Esophagus muscularis mucosa (tissue), 4 donors: ENCODE measurements at regions of chr18 and their contacts with region 1.

Region 1: GRCh38 chr18:9516437-9517064 is 41.2 kb downstream of the RALBP1 start:
- DNase-seq: no peak
- H3K4me3 ChIP-seq: no peak overlapping the region
- H3K27ac ChIP-seq: peak overlapping the region in 3 of 4 donors; percentile 12 to 37 (median 28)
- H3K4me1 ChIP-seq: peaks cover 0 to 50% (median 32%) of the 10 kb centered on the region in 4 donors
- H3K27me3 ChIP-seq: no peaks in the 10 kb centered on the region
- CTCF ChIP-seq: peak; percentile 73 to 87 (median 78)
- EP300 ChIP-seq: no peak
- POLR2A ChIP-seq: no peak

Region 2: DNA sequence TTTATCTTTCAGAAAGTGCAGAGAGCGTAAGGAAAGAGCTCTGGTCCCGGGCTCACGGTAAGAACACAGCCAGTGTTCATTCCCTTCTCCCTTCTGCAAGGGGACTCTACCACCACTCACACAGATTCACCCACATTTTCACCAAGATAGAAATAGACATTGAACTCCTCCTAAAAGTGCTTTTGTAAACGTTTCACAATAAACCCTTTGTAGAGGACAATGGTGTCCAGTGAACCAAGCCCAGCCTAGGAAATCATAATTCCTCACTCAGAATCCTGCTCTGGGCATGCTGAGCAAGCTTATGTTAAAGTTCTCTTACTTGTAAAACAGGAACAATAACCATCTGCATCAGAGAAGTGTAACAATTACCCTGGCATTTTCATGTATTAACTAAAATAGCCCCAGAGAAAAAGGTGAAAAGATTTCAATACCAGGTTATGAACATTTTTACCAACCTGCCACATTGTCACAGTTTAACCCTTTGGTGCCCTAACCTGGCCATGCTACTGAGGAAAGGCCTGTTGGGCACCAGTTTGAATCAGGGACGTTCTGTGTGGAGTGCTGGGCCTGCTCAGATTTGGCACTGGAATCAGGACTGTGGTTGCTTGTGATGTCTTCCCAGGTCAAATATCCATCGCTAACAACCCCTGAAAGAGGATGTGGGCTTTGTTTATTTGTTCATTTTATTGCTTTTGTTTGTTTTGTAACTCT is 436.6 kb before region 1 on chr18:
- intact Hi-C with region 1: loop called (anchors 10 kb)
- DNase-seq: no peak
- H3K4me3 ChIP-seq: no peak overlapping the region
- H3K27ac ChIP-seq: peak overlapping the region in 3 of 4 donors; percentile 13 to 31 (median 23)
- H3K4me1 ChIP-seq: peaks cover 0 to 7% (median 3%) of the 10 kb centered on the region in 4 donors
- H3K27me3 ChIP-seq: no peaks in the 10 kb centered on the region
- CTCF ChIP-seq: no peak
- EP300 ChIP-seq: no peak
- POLR2A ChIP-seq: no peak

Region 3: GRCh38 chr18:9366192-9366591 is 150.4 kb before region 1 on chr18:
- intact Hi-C with region 1: loop called (anchors 10 kb)
- DNase-seq: no peak
- H3K4me3 ChIP-seq: no peak overlapping the region
- H3K27ac ChIP-seq: peak overlapping the region in 3 of 4 donors; percentile 28 to 58 (median 33)
- H3K4me1 ChIP-seq: peaks cover 0 to 46% (median 35%) of the 10 kb centered on the region in 4 donors
- H3K27me3 ChIP-seq: no peaks in the 10 kb centered on the region
- CTCF ChIP-seq: peak; percentile 24 to 37 (median 24)
- EP300 ChIP-seq: no peak
- POLR2A ChIP-seq: no peak

Region 4: DNA sequence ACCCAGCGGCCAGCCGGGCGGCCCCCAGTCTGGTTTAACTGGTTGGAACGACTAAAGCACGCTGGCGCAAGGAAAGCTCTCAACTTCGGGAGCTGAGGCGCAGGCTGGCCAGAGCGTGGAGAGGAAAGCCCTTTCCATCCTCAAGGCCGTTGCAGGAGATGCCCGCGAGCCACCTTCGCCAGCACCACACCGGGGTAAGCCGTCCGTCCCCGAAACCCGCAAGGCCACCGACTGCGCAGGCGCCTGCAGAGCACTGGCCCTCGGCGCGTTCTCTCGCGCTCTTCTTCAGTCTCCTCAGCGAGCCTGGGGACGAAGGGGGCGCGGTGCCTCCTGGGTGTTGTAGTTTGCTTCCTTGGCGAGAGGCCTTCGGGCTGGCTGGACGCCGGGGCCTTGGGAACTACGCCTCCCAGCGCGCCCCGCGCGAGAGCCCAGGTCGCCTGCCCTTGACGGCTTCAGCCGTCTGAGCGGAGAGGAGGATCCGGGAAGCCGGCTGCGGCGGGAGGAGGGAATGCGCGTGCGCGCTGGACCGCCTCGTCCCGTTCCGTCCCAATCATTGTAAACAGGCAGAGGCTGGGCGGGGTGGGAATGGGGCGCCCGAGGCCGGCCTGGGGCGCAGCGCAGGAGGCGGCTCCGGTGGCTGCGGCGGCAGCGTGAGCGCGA is 41.4 kb before region 1 on chr18 and contains the start of gene RALBP1:
- intact Hi-C with region 1: loop called (anchors 5 kb)
- DNase-seq: peak; percentile 99
- H3K4me3 ChIP-seq: peak within 1 kb of the TSS; percentile 82 to 94 (median 88)
- H3K27ac ChIP-seq: peak within 1 kb of the TSS; percentile 87 to 96 (median 92)
- H3K4me1 ChIP-seq: peaks cover 19 to 28% (median 20%) of the 10 kb centered on the region in 4 donors
- H3K27me3 ChIP-seq: no peaks in the 10 kb centered on the region
- CTCF ChIP-seq: peak in 2 of 3 experiments; percentile 39 to 51
- EP300 ChIP-seq: no peak
- POLR2A ChIP-seq: peak; percentile 53
- total RNA-seq, gene RALBP1: 103 to 164 (median 115) TPM

Region 5: GRCh38 chr18:9575558-9575957 is 59.0 kb after region 1 on chr18:
- intact Hi-C with region 1: no loop called
- DNase-seq: no peak
- H3K4me3 ChIP-seq: no peak overlapping the region
- H3K27ac ChIP-seq: peak overlapping the region; percentile 4 to 37 (median 10)
- H3K4me1 ChIP-seq: peaks cover 6 to 16% (median 8%) of the 10 kb centered on the region in 4 donors
- H3K27me3 ChIP-seq: no peaks in the 10 kb centered on the region
- CTCF ChIP-seq: peak; percentile 89 to 94 (median 91)
- EP300 ChIP-seq: no peak
- POLR2A ChIP-seq: no peak

Region 6: GRCh38 chr18:11034884-11035283 is 1518.3 kb after region 1 on chr18:
- intact Hi-C with region 1: no loop called
- DNase-seq: no peak
- H3K4me3 ChIP-seq: no peak overlapping the region
- H3K27ac ChIP-seq: no peak overlapping the region
- H3K4me1 ChIP-seq: no peaks in the 10 kb centered on the region
- H3K27me3 ChIP-seq: peaks cover 0 to 4% (median 0%) of the 10 kb centered on the region in 4 donors
- CTCF ChIP-seq: no peak
- EP300 ChIP-seq: no peak
- POLR2A ChIP-seq: no peak